HepG2 (cell line): ENCODE measurements at regions of chr4 and their contacts with region 1.

Region 1: DNA sequence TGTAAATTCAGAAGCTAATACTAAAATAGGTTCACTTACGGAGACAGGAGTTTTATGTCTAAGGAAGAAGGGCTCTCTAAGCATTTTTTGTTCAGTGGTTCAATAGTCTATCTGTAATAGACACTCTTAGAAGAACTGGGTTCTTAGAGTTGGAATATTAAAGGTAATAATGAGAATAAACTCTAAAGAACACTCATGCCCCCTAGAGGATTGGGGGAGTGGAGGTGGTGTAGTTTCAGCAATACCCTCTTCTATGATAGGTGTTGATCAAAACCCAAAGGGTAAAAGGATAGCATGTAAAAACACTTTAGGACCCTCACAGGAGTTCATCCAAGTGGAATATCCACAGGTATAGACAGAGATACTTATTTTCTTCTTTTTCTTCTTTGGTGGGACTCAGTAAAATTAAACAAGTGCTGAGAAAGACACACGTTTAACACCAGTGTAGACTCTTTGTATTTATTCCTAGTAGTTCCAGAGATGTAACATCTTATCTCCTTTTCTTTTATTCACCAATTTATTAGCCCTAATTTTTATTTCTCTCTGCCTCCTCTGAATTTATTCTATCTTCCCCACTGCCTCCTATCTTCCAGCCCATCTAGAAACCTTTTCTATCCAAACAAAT is 25.7 kb upstream of the MND1 start:
- DNase-seq: peak; percentile 40
- ATAC-seq: peak; percentile 78
- H3K4me3 ChIP-seq: no peak overlapping the region
- H3K27ac ChIP-seq: no peak overlapping the region
- H3K4me1 ChIP-seq: peaks cover 13% of the 10 kb centered on the region
- H3K27me3 ChIP-seq: no peaks in the 10 kb centered on the region
- CTCF ChIP-seq: peak; percentile 67
- EP300 ChIP-seq: no peak
- POLR2A ChIP-seq: no peak
- RAD21 ChIP-seq: 0 out of 2 replicates have a peak, but pooled peaks have one; percentile 41

Region 2: GRCh38 chr4:153232768-153233167 is 86.0 kb before region 1 on chr4:
- CTCF ChIA-PET with region 1: interaction called, 4 read pairs
- POLR2A ChIA-PET with region 1: no interaction called
- in situ Hi-C with region 1: loop called (anchors 5 kb)
- intact Hi-C with region 1: loop called (anchors 1 kb)
- DNase-seq: peak; percentile 39
- ATAC-seq: peak; percentile 95
- H3K4me3 ChIP-seq: no peak overlapping the region
- H3K27ac ChIP-seq: no peak overlapping the region
- H3K4me1 ChIP-seq: peaks cover 7% of the 10 kb centered on the region; the same call in 1 of the 2 replicates
- H3K27me3 ChIP-seq: no peaks in the 10 kb centered on the region
- CTCF ChIP-seq: peak; percentile 70
- EP300 ChIP-seq: no peak
- POLR2A ChIP-seq: no peak
- RAD21 ChIP-seq: peak; percentile 50; the same call in 1 of the 2 replicates